Activated CD4-positive, alpha-beta T cell treated with anti-CD3 and anti-CD28 coated beads for 36 hours (primary cell): ENCODE measurements at regions of chr1 and their contacts with region 1.

Region 1: DNA sequence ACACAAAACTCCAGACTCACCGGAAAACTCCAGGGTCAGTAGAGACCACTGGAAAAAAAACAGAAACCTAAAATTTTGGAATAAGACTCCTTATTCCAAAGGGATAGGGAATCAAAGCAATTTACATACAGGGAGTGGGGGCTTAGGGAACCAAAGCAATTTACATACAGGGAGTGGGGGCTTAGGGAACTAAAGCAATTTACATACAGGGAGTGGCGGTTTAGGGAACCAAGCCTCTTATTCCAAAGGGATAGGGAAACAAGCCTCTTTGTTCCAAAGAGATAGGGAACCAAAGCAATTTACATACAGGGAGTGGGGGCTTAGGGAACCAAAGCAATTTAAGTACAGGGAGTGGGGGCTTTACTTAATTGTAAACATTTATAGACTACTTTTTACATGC is 28.4 kb upstream of the TTLL7 start:
- DNase-seq: no peak
- ATAC-seq: no peak
- H3K4me3 Mint-ChIP-seq: no peak overlapping the region
- H3K27ac Mint-ChIP-seq: no peak overlapping the region
- H3K4me1 Mint-ChIP-seq: no peaks in the 10 kb centered on the region
- H3K27me3 Mint-ChIP-seq: peaks cover 2% of the 10 kb centered on the region

Region 2: DNA sequence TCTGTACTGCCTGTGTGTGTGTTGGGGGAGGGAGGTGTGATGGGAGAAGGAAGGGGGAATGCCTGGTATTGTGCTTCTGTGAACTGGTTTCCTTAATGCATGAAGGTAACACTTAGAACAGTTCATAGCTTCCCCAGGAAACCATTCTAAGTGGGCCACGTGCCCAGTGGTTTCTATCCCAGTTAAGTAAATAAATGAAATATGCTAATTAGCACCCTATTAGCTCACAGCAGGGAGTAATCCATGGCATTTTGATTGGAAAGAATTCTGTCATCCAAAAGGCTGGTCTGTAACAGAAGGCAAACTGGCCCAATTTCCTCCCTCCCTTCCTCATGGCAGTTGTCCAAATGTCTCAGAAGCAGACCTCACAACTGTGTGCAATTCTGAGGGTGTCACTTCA is 227.8 kb before region 1 on chr1:
- CTCF ChIA-PET with region 1: no interaction called
- POLR2A ChIA-PET with region 1: no interaction called
- intact Hi-C with region 1: no loop called
- DNase-seq: no peak
- ATAC-seq: no peak
- H3K4me3 Mint-ChIP-seq: no peak overlapping the region
- H3K27ac Mint-ChIP-seq: no peak overlapping the region
- H3K4me1 Mint-ChIP-seq: no peaks in the 10 kb centered on the region
- H3K27me3 Mint-ChIP-seq: no peaks in the 10 kb centered on the region

Region 3: DNA sequence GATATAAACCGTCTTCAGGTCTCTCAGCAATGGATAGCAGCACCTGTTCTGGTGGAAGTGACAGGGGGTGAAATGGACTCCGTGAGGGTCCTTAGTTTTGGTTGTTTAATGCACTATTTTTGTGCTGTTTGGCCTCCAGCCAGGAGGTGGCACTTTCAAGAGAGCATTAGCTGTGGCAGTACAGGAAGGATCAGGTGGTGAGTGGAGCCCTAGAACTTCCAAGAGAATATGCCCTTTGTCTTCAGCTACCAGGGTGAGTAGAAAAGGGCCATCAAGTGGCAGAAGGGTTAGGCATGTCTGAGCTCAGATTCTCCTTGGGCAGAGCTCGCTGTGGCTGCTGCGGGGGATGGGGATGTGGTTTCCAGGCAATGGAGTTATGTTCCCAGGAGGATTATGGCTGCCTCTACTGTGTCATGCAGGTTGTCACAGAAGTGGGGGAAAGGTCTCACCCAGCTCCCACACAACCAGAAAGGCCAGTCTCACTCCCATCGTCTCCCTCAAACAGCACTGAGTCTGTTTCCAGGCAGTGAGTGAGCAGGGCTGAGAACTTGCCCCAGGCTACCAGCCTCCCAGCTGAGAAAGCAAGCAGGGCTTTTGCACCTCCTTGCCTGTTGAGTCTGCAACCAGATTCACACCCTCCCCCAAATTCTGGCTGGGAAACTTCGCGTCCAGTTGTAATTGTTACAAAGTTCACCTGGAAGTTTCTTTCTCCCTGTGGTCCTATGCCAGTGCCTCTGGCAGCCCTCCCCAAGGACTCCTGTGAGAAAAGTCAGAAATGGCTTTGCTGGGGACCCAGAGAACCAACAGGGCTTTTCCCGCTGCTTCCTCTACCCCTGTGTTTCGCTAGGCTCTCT is 10.6 kb after region 1 on chr1:
- CTCF ChIA-PET with region 1: no interaction called
- POLR2A ChIA-PET with region 1: no interaction called
- intact Hi-C with region 1: loop called in 1 of 2 experiments (anchors 2 kb)
- DNase-seq: no peak
- ATAC-seq: no peak
- H3K4me3 Mint-ChIP-seq: no peak overlapping the region
- H3K27ac Mint-ChIP-seq: no peak overlapping the region
- H3K4me1 Mint-ChIP-seq: no peaks in the 10 kb centered on the region
- H3K27me3 Mint-ChIP-seq: peaks cover 10% of the 10 kb centered on the region